AG04449 (cell line): ENCODE measurements at regions of chr7 and their contacts with region 1.

Region 1: DNA sequence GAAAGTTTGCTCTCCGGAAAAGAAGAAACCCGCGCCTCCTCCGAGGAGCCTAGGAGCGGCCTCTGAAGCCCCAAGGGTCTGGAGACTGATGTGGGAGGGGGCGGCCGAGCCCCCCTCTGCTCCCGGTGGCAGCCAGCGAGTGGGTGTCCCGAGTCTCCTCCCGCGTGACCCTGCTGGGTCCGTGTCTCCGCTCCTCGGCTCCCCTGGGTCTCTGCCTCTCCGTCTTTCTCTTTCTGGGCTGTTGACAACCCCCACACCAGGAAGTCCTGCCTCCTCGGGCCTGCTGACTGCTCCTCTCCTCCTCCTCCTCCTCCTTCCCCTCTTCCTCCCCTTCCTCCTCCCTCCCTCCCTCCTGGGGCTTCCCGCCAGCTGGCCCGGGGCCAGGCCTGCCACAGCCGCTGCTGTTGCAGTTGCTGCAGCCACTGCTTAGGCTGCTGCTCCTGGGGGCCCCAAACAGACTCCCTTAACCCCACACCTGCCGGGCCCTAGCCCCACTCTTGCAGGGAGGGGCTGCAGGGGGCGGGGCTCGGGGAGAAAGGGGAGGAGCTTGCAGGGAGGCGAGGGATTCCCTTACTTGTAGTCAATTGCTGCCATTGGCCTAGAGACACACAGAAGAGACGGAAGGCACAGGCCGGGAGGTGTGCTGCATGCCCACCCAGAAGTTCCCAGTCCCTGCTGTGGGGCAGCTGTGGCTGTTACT is at the start of gene TSC22D4:
- DNase-seq: peak; percentile 73
- H3K4me3 ChIP-seq: peak within 1 kb of the TSS; percentile 90
- CTCF ChIP-seq: no peak

Region 2: GRCh38 chr7:100456558-100456957 is 22.6 kb before region 1 on chr7:
- CTCF ChIA-PET with region 1: interaction called, 152 read pairs
- POLR2A ChIA-PET with region 1: no interaction called
- DNase-seq: no peak
- H3K4me3 ChIP-seq: no peak overlapping the region
- CTCF ChIP-seq: no peak

Region 3: DNA sequence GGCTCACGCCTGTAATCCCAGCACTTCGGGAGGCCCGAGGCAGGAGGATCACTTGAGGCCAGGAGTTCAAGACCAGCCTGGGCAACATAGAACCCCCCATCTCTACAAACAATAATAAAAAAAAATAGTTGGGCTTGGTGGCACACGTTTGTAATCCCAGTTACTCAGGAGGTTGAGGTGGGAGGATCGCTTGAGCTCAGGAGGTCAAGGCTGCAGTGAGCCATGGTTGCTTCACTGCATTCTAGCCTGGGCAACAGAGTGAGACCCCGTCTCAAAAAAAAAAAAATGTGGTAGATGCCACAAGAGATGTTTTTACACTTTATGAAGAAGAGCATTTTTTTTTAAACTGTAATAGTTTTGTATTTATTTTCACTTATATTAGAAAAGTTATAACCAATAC is 17.4 kb after region 1 on chr7:
- CTCF ChIA-PET with region 1: interaction called, 42 read pairs
- POLR2A ChIA-PET with region 1: interaction called, 3 read pairs
- DNase-seq: no peak
- H3K4me3 ChIP-seq: no peak overlapping the region
- CTCF ChIP-seq: no peak

Region 4: DNA sequence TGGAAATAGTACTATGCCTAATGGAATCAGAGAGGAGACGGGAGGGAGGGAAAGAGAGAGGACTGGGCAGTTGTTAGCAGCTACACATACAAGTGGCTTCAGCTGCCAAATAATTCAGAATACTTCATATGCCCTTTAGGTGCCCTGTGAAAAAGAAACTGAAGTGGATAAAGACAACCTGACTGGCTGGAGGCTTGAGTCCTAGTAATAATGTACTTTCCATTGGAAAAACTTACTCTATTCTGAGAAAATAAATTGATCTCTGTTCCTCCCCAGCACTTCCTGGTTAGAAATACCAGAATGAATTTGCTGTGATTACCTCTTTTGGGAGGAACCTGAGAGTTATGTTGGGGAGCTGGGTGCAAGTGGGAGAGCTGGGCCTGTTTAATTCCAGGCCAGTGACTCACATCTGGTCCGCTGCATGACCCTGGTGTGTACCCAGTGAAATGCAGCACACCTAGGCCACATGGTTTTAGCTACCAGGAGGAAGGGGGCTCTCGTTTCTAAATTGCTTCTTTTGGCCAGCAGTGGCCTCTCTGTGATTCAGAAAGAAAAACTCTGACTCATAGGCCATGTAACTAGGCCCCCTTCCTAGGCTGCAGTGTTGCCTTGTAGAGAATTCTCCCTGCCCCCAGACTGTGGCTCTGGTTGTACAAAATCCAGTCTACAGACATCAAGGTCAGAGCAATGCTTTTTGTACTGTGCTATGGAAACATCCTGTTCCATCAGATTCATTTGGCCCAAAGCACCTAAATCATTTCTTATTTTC is 66.4 kb after region 1 on chr7:
- CTCF ChIA-PET with region 1: interaction called, 36 read pairs
- POLR2A ChIA-PET with region 1: no interaction called
- DNase-seq: peak; percentile 41
- H3K4me3 ChIP-seq: no peak overlapping the region; the same call in 1 of the 2 replicates
- CTCF ChIP-seq: no peak

Region 5: DNA sequence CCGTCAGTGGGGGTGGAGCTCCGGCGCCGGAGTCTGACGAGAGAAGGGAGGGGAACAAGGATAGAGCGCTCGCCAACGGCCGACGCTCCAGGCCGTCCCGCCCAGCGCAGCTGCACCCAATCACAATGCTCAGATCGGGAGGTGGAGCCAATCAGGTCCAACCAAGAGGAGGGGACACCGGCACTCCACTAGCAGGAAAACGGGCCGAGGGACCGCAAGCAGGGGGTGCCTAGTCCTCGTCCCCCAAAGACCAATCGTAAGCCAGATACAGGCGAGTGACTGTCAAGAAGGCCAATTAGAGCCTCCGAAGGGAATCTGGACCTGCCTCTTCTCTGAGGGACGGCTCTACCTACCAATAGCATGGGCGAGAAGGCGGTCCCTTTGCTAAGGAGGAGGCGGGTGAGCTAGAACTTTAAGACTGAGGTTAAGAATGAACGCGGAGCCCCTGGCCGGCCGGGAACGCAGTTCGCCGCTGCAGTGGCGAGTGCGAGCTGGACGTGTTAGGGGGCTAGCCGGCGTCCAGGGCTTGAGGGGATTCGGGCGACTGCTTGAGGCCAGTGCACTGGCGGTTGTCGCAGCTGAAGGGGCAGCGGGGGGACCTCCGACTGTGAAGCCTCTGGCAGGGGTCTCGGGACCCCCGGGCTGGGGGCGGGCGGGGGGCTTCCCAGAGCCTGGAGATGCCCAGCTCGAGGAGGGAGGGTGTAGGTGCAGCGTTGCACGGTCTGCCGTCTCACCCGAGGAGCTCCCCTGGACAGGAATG is 107.3 kb after region 1 on chr7 and contains the start of gene FBXO24:
- CTCF ChIA-PET with region 1: interaction called, 17 read pairs
- POLR2A ChIA-PET with region 1: no interaction called
- DNase-seq: peak; percentile 100
- H3K4me3 ChIP-seq: peak within 1 kb of the TSS; percentile 92
- CTCF ChIP-seq: no peak